Activated CD4-positive, alpha-beta T cell treated with anti-CD3 and anti-CD28 coated beads for 36 hours (primary cell): ENCODE measurements at regions of chr15 and their contacts with region 1.

Region 1: DNA sequence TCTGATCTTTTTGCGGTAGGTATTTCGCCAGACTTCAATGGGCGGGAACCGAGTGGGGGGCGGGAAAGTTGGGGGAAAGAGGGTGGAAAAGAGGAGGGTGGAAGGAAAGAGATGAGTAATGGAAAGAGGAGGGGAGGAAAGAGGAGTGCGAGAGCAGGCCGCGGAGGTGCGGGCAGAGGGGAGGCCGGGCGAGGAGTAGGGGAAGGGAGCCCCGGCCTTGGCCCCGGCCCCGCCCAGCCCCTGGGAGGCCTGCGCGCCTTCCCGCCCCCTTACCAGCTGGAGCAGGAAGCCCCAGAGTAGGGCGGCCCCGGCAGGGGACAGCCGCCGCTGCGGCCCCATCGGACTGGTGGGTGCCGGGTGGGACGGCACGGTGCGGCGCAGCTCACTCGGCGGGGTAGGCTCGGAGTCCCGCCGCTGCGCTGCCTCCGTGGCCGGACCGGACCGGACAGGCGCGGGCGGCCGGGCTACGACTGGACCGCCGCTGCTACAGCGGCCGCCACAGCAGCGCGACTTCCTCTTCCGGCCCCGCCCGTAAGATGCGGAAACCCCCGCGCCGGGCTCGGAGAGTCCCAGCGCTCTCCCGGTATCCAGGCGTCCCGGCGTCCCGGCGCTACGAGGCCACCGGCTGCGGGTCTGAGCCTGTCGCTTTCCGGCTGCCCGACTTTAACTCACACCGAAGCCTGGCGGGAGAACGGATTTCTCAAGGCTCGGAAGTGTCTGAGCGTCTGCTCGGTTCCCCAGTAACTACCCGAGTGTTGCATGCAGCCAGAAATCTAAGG is at the start of gene SPPL2A:
- DNase-seq: peak; percentile 96
- ATAC-seq: peak; percentile 90
- H3K4me3 Mint-ChIP-seq: peak within 1 kb of the TSS; percentile 82
- H3K27ac Mint-ChIP-seq: peak within 1 kb of the TSS; percentile 99
- H3K4me1 Mint-ChIP-seq: peaks cover 50% of the 10 kb centered on the region
- H3K27me3 Mint-ChIP-seq: no peaks in the 10 kb centered on the region
- total RNA-seq, gene SPPL2A: 53.1 to 66.1 TPM

Region 2: GRCh38 chr15:49620658-49621368 is 1144.6 kb before region 1 on chr15 and contains the starts of genes DTWD1 and FAM227B:
- CTCF ChIA-PET with region 1: no interaction called
- POLR2A ChIA-PET with region 1: no interaction called
- intact Hi-C with region 1: loop called in 1 of 2 experiments (anchors 2 kb)
- DNase-seq: peak; percentile 96
- ATAC-seq: peak; percentile 98
- H3K4me3 Mint-ChIP-seq: peak within 1 kb of the TSS; percentile 86
- H3K27ac Mint-ChIP-seq: peak within 1 kb of the TSS; percentile 88
- H3K4me1 Mint-ChIP-seq: peaks cover 36% of the 10 kb centered on the region
- H3K27me3 Mint-ChIP-seq: no peaks in the 10 kb centered on the region
- total RNA-seq, gene DTWD1: 20.4 to 22.4 TPM
- total RNA-seq, gene FAM227B: 2.7 to 4.4 TPM

Region 3: DNA sequence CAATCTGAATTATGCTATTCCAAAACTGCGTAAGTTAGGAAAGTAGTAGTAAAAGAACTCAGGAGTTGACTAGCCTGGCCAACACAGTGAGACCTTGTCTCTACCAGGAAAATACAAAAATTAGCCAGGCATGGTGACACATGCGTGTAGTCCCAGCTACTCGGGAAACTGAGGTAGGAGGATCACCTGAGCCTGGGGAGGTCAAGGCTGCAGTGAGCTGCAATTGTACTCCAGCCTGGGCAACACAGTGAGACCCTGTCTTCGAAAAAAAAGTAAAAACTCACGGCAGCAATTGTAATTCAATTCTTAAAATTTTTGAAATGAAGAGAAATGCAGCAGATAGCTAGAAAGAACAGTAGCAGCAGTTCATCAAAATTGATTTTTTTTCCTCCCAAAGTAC is 420.1 kb before region 1 on chr15:
- CTCF ChIA-PET with region 1: no interaction called
- POLR2A ChIA-PET with region 1: interaction called, 10 read pairs
- intact Hi-C with region 1: no loop called
- DNase-seq: no peak
- ATAC-seq: no peak
- H3K4me3 Mint-ChIP-seq: no peak overlapping the region
- H3K27ac Mint-ChIP-seq: no peak overlapping the region
- H3K4me1 Mint-ChIP-seq: peaks cover 39% of the 10 kb centered on the region
- H3K27me3 Mint-ChIP-seq: no peaks in the 10 kb centered on the region

Region 4: GRCh38 chr15:50686468-50687301 is 78.7 kb before region 1 on chr15 and contains the start of gene TRPM7:
- CTCF ChIA-PET with region 1: interaction called, 3 read pairs
- POLR2A ChIA-PET with region 1: interaction called, 6 read pairs
- intact Hi-C with region 1: loop called (anchors 1 kb)
- DNase-seq: peak; percentile 95
- ATAC-seq: peak; percentile 79
- H3K4me3 Mint-ChIP-seq: peak within 1 kb of the TSS; percentile 99
- H3K27ac Mint-ChIP-seq: peak within 1 kb of the TSS; percentile 97
- H3K4me1 Mint-ChIP-seq: peaks cover 49% of the 10 kb centered on the region
- H3K27me3 Mint-ChIP-seq: no peaks in the 10 kb centered on the region
- total RNA-seq, gene TRPM7: 40.7 to 41.4 TPM

Region 5: DNA sequence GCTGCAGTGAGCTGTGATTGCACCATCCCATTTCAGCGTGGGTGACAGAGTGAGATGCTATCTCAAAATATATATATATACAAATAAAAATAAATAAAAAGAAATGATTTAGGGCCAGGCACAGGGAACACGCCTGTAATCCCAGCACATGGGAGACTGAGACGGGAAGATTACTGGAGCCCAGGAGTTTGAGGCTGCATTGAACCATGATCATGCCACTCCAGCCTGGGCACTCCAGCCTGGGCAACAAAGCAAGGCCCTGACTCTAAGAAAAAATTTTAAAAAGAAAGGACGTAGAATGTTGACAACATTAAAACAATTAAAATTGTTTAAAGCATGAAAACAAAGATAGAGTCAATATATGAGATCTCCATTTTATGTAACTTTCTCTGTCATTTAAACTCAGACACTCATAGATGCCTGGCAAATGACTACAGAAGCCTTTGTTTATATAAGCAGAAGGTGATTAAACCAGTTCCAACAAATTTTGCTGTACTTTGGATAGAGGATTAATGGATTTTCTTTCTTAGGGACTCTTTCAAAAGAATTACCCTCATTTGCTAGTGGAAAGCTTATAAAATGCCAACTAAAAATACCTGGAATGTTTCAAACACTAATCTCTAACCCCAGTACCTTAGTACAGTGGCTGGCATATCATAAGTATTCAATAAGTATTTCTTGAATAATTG is 68.1 kb before region 1 on chr15:
- CTCF ChIA-PET with region 1: no interaction called
- POLR2A ChIA-PET with region 1: no interaction called
- intact Hi-C with region 1: no loop called
- DNase-seq: no peak
- ATAC-seq: no peak
- H3K4me3 Mint-ChIP-seq: no peak overlapping the region
- H3K27ac Mint-ChIP-seq: no peak overlapping the region
- H3K4me1 Mint-ChIP-seq: no peaks in the 10 kb centered on the region
- H3K27me3 Mint-ChIP-seq: no peaks in the 10 kb centered on the region

Region 6: GRCh38 chr15:50876989-50877360 is 111.6 kb after region 1 on chr15:
- CTCF ChIA-PET with region 1: interaction called, 7 read pairs
- POLR2A ChIA-PET with region 1: interaction called, 3 read pairs
- intact Hi-C with region 1: loop called (anchors 1 to 2 kb)
- DNase-seq: peak; percentile 79
- ATAC-seq: no peak
- H3K4me3 Mint-ChIP-seq: peak overlapping the region; percentile 51
- H3K27ac Mint-ChIP-seq: peak overlapping the region; percentile 62
- H3K4me1 Mint-ChIP-seq: peaks cover 50% of the 10 kb centered on the region
- H3K27me3 Mint-ChIP-seq: peaks cover 12% of the 10 kb centered on the region

Region 7: GRCh38 chr15:52005748-52006701 is 1240.6 kb after region 1 on chr15:
- CTCF ChIA-PET with region 1: no interaction called
- POLR2A ChIA-PET with region 1: no interaction called
- intact Hi-C with region 1: loop called in 1 of 2 experiments (anchors 2 kb)
- DNase-seq: peak; percentile 54
- ATAC-seq: peak; percentile 90
- H3K4me3 Mint-ChIP-seq: peak overlapping the region; percentile 6
- H3K27ac Mint-ChIP-seq: peak overlapping the region; percentile 56
- H3K4me1 Mint-ChIP-seq: peaks cover 64% of the 10 kb centered on the region
- H3K27me3 Mint-ChIP-seq: no peaks in the 10 kb centered on the region